BJ (cell line): ENCODE measurements at regions of chr7 and their contacts with region 1.

Region 1: DNA sequence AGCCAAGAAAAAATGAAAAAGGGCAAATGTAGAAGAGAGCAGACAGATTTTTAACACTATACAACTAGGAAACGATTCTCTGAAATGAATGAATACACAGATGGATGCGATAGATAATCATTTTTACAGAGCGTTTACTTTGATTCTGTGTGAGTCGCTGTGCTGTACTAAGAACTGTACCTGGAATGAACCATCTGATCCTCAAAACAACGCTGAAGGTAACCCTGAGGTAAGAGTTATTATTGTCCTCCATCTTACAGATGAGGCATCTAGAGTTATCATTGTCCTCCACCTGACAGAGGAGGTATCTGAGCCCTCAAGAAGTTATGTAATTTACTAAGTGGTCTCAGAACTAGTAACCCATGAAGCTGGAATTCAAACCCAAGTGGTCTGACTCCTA is 80.2 kb downstream of the CHCHD3 start:
- DNase-seq: no peak
- H3K4me3 ChIP-seq: no peak overlapping the region
- H3K27me3 ChIP-seq: no peaks in the 10 kb centered on the region
- CTCF ChIP-seq: no peak

Region 2: DNA sequence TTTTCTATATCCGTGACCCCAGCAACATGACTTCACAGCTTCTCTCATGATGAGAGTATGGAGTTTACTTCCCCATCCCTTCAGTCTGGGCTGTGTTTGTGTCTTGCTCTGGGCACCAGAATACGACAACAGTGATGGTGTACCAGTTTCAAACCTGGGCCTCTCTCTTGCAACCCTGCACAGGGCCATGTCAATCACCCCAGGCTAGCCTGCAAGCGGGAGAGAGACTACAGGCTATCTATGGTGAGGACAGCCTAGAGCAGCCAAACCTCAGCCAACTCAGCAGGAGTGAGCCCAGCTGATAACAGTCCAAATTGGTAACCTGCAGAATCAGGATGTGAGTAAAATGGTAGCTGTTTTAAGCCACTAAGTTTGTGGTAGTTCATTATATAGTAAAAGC is 155.6 kb before region 1 on chr7:
- CTCF ChIA-PET with region 1: no interaction called
- POLR2A ChIA-PET with region 1: no interaction called
- DNase-seq: no peak
- H3K4me3 ChIP-seq: no peak overlapping the region
- H3K27me3 ChIP-seq: no peaks in the 10 kb centered on the region
- CTCF ChIP-seq: no peak

Region 3: DNA sequence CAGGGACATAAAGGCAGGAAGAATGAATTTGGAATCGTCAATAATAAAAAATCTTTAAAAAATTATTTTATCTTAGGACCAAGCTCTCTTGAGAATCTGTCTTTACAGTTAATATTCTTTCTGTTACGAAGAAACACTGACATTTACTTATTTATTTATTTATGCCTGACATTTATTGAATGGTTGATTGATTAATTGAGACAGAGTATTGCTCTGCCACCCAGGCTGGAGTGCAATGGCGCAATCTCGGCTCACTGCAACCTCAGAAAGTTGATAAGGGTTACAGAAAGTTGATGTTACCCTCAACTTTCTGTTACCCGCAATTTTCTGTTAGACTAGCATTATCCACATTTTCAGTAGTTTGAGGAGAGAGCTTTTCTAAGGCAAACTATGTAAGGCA is 10.0 kb after region 1 on chr7:
- CTCF ChIA-PET with region 1: interaction called, 10 read pairs
- POLR2A ChIA-PET with region 1: interaction called, 4 read pairs
- DNase-seq: no peak
- H3K4me3 ChIP-seq: no peak overlapping the region
- H3K27me3 ChIP-seq: no peaks in the 10 kb centered on the region
- CTCF ChIP-seq: no peak

Region 4: GRCh38 chr7:133051066-133051465 is 49.3 kb after region 1 on chr7:
- CTCF ChIA-PET with region 1: no interaction called
- POLR2A ChIA-PET with region 1: no interaction called
- DNase-seq: no peak
- H3K4me3 ChIP-seq: no peak overlapping the region
- H3K27me3 ChIP-seq: no peaks in the 10 kb centered on the region
- CTCF ChIP-seq: peak; percentile 36

Region 5: GRCh38 chr7:133139350-133139749 is 137.6 kb after region 1 on chr7:
- CTCF ChIA-PET with region 1: no interaction called
- POLR2A ChIA-PET with region 1: no interaction called
- DNase-seq: no peak
- H3K4me3 ChIP-seq: no peak overlapping the region
- H3K27me3 ChIP-seq: peaks cover 1% of the 10 kb centered on the region; the same call in 1 of the 2 replicates
- CTCF ChIP-seq: no peak